GM10248 (cell line): ENCODE measurements at regions of chr1 and their contacts with region 1.

Region 1: DNA sequence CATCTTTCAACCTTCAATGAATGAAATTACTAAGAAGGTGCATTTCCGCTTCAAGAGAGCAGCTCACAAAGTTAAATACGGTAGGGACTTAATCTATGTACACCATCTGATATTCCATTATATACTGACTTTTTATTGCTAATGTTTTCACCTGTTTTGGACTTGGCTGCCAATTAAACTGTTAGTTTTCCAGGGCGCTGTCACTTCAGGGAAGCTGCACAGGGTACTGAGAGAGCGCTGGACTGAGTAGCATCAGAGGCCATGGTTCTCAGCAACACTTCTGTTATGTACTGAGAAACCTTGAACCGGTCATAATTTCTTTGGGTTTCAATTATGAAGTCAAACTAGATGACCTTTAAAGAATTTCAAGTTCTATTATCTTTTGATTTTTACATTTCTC is 8.2 kb downstream of the SSX2IP start:
- DNase-seq: no peak
- CTCF ChIP-seq: no peak

Region 2: DNA sequence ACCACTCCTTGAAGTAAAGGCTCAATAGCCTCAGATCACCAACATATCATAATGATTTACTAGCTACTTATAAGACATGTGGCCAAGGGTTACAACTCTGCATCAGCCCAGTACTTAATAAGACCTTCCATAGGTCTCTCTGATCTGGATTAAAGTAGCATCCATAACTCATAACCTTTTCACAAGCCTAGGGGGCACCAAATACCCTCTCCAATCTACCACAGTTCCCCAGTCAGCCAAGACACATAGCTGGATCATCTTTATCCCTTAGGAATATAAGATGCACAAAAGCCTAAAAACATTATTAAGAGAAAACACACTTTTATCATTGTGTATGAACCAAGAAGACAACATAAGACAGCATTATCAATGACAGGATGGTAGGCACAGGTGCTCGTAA is 13.9 kb before region 1 on chr1:
- CTCF ChIA-PET with region 1: interaction called, 13 read pairs
- POLR2A ChIA-PET with region 1: no interaction called
- DNase-seq: no peak
- CTCF ChIP-seq: no peak